Mucosa of descending colon (tissue), 3 donors: ENCODE measurements at regions of chr11 and their contacts with region 1.

Region 1: DNA sequence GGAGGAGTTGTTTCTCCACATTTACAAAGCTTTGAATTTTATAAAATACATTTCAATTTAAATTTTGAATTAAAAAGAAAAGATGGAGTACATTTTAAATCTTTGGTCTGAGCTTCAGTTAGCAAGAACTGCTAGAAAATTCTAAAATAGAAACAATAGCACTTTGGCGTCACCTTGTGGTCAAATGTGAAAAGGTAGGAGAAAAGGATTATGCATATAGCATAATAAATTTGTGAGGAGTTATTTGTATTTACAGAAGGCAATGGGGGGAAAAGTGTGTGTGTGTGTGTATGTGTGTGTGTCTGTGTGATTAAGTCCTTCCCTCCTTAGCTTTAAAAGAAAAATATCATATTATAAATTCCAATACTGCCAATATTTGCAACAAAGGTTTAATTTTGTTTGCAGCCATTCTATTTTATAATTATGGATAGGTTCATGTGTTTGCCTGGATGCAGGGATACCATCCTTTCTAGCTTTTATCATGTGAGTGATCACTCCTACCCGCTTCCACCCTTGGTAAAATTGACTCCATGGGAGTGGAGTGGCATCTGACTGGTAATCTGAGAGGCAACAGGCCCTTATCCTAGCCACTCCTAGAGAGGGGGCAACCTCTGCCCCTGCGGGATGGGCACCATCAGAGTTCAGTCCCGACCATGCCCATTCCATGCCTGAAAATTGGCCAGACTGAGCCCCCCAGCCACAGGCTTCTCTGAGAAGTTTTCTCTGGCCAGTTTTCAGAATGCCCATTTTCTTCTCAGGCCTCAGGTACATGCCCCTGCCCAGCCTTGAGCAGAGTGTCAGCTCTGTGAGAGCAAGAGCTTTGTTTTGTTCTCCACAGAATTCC is 13.6 kb upstream of the LGR4 start:
- DNase-seq: peak in 1 of 3 donors; percentile 84
- ATAC-seq: peak; percentile 65
- H3K4me3 ChIP-seq: no peak overlapping the region
- H3K4me1 ChIP-seq: no peaks in the 10 kb centered on the region
- CTCF ChIP-seq: peak; percentile 59

Region 2: DNA sequence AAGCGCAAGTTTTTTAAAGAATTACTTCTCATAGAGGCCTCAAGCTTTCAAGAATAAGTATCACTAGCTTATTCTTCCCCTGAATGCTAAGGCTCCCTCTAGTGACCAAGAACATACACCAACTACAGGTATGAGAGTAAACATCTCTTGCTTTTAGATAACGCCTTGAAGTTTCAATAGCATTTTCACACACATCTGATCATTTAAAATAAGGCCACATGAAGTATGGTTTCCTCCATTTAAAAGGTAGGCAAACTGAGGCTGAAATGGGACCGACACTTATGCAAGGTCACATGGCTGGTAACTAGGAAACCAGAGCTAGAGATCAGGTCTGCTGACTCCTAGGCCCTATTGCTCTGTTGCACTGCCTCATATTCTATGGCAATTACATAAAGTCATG is 189.7 kb before region 1 on chr11:
- intact Hi-C with region 1: loop called in 1 of 2 experiments (anchors 10 kb)
- DNase-seq: peak in 1 of 3 donors; percentile 46
- ATAC-seq: peak; percentile 45
- H3K4me3 ChIP-seq: no peak overlapping the region
- H3K4me1 ChIP-seq: peaks cover 28% of the 10 kb centered on the region
- CTCF ChIP-seq: peak; percentile 24